ENCODE measurements at regions of chr7 and their contacts with region 1.

Region 1: GRCh38 chr7:148856891-148857290 is 27.2 kb downstream of the EZH2 start:
- DNase-seq: peak; percentile 25
- CTCF ChIP-seq: no peak

Region 2: GRCh38 chr7:148815612-148816011 is 41.3 kb before region 1 on chr7:
- CTCF ChIA-PET with region 1: interaction called, 10 read pairs
- POLR2A ChIA-PET with region 1: no interaction called
- DNase-seq: no peak
- CTCF ChIP-seq: no peak

Region 3: GRCh38 chr7:148838905-148839304 is 18.0 kb before region 1 on chr7:
- CTCF ChIA-PET with region 1: interaction called, 16 read pairs
- POLR2A ChIA-PET with region 1: no interaction called
- DNase-seq: no peak
- CTCF ChIP-seq: no peak

Region 4: GRCh38 chr7:148867596-148868377 is 10.9 kb after region 1 on chr7:
- CTCF ChIA-PET with region 1: interaction called, 24 read pairs
- POLR2A ChIA-PET with region 1: no interaction called
- DNase-seq: no peak
- CTCF ChIP-seq: no peak

Region 5: DNA sequence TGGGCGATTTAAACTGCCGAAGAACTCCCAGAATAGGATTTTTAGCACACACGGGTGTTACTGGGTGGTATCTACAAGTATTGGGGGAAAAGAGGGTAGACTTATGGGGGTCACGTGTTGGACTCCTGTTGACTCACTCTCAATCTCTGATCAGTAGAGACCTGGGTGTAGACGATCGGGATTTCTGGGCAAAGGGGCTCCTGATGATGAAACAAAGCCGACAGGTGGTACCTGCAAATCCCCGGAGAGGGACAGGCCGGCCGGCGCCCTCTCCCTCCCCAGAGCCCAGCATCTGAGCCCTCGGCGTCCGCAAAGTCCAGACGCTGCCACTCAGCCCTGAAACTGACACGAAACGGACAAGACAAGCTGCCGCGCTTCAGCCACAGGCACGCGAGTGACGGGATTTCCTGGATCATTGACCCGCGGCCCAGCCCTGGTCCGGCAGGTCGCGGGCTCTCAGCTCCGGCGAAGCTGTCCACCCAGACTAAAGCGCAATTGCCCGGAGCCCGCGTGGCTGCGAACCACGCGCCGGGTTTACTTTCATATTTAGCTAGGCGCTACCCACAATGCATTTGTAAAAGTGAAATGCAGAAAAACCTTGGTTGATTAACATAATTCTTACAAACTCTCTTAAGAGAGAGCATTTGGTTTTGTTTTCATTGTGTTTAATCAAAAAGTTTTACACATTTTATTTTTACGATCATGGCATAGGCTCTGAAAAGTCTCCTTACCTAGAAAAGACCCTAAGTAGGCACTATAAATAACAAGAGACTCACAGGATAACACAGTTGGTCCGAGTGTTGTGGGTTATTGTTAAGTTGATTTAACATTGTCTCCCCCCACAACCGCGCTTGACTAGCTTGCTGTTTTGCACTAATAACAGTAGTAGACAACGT is 84.1 kb after region 1 on chr7:
- CTCF ChIA-PET with region 1: interaction called, 17 read pairs
- POLR2A ChIA-PET with region 1: no interaction called
- DNase-seq: peak; percentile 81
- CTCF ChIP-seq: no peak